GM10248 (cell line): ENCODE measurements at regions of chr22 and their contacts with region 1.

Region 1: GRCh38 chr22:40346178-40347118 is at the start of gene ADSL:
- DNase-seq: peak; percentile 92
- CTCF ChIP-seq: no peak

Region 2: DNA sequence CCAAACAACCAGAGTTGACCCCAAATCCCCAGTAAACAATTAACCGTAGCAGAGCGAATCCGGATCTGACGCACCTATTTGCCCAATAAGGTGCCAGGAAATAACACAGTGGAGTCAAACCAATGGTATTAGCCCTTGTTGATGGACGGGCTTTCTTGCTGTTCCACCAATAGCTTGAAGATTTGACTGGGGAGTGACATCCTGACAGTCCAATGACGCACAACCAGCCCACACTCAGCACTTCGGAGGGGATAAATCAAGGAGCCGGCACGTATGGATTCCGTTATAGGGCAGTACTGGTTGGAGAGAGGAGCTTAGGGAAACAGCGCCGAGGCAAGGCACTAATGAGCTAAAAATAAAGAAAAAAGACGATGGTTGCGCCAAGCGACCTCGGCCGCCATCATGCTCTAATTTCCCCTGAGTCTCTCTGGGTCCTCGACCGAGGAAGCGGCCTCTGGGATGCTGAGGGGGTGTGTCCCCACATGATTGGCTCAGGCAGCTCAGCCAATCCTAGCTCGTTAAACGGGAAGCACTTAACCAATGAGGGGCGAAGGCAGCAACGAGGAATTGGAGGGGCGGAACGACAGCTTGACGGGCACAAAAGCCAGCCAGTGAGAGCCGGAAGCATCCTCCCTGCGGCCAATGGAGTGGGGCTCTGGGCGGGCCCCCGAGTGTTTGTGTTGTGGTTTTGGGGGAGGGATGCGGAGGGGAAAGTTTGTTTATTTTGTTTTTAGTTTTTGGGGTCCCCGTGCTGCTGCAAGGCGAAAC is 302.2 kb before region 1 on chr22:
- CTCF ChIA-PET with region 1: interaction called, 19 read pairs
- POLR2A ChIA-PET with region 1: interaction called, 4 read pairs
- DNase-seq: peak; percentile 98
- CTCF ChIP-seq: no peak

Region 3: GRCh38 chr22:40334899-40335298 is 11.5 kb before region 1 on chr22:
- CTCF ChIA-PET with region 1: interaction called, 10 read pairs
- POLR2A ChIA-PET with region 1: interaction called, 3 read pairs
- DNase-seq: no peak
- CTCF ChIP-seq: no peak

Region 4: GRCh38 chr22:40363059-40363458 is 16.6 kb after region 1 on chr22:
- CTCF ChIA-PET with region 1: interaction called, 23 read pairs
- POLR2A ChIA-PET with region 1: no interaction called
- DNase-seq: no peak
- CTCF ChIP-seq: no peak

Region 5: DNA sequence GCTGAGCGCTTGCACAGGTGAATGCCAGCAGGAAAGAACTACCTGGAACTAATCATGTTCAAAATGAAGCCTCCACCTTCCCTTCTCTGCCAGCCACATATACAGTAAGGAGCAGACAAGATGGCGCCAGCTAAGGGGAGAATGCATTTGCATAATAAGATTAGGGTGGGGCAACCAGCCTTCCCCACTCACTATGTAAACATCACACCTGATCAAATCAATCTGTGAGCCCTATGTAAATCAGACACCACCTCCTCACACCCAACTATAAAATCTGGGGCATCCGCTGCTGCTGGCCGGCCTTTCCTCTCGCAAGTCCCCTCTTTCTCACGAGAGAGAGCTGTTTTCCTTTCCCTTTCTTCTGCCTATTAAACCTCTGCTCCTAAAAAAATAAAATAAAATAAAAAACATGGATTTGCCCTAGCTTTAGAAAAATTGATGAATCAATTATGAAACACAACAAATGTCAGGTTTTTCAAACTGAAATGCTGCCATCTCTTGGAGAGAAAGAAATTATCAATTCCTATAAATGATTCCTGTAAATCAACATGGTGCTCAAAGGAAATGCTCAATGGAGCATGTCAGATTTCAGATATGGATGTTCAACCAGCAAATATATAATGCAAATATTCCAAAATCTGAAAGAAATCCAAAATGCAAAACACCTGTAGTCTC is 132.8 kb after region 1 on chr22:
- CTCF ChIA-PET with region 1: no interaction called
- POLR2A ChIA-PET with region 1: no interaction called
- DNase-seq: no peak
- CTCF ChIP-seq: no peak